Endothelial cell of umbilical vein (primary cell): ENCODE measurements at regions of chr7 and their contacts with region 1.

Region 1: DNA sequence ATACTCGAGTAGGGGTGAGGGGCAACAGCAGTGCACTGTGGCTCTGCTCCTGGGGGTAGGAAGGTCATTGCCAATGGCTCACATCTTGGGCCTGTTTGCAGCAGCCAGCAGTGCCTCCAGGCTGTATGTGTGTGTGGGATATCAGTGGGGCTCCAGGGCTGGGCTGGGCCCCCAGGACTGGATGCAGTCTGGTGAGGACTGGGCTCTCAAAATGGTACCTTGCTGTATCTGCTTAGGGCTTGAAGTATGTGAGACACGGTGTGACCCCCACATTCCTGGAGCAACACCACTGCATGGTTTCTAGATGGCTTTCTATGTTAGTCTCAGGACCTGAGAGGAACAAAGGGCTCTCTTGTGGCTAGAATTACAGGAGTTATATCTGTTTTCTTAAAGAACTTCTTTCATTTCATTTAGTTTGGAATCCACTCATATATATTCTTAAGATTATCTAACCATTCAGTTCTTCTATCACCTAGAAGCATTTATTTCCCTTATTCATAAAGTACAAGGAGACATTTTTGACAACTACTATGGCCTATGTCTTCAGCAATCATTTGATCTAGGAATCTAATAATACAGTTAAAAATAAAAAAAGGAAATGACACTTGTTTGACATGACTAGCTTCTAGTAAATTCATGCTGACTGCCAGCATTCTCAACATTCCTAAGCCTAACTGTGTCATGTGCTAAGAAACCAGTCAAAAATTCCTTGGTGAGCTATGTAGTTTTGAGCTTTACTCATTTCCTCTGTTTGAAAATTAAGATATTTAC is 443.2 kb upstream of the SEMA3A start:
- DNase-seq: peak; percentile 92
- H3K4me3 ChIP-seq: no peak overlapping the region
- H3K27ac ChIP-seq: peak overlapping the region; percentile 97
- H3K4me1 ChIP-seq: peaks cover 25% of the 10 kb centered on the region
- H3K27me3 ChIP-seq: no peaks in the 10 kb centered on the region
- CTCF ChIP-seq: no peak
- POLR2A ChIP-seq: no peak

Region 2: DNA sequence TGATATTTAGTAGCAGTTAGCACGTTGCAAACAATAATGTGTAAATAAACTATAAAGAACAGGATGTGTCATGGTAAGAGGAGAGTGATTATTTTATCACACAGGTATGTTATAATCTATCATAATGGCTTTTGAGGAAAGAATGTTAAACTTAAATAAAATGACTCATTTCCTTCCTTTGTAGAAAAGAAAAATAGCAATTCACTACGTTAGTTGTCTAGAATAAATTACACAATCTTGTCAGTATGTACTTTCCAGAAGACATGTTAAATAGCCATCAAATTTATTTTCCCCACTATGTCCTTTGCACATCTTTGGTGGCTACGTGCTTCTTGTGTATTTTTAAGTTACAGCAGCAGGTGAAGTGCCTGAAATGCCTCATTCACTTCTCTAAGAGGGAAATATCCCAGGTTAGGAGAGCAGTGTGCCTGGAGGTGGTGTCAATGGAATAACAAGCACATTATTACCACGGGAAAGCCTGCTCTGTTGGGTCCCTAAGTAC is 576.9 kb before region 1 on chr7:
- CTCF ChIA-PET with region 1: no interaction called
- POLR2A ChIA-PET with region 1: no interaction called
- dilution Hi-C with region 1: no loop called
- intact Hi-C with region 1: loop called (anchors 1 kb)
- DNase-seq: peak; percentile 77
- H3K4me3 ChIP-seq: peak overlapping the region in 1 of 3 experiments; percentile 32
- H3K27ac ChIP-seq: peak overlapping the region; percentile 89
- H3K4me1 ChIP-seq: peaks cover 24% of the 10 kb centered on the region
- H3K27me3 ChIP-seq: no peaks in the 10 kb centered on the region
- CTCF ChIP-seq: no peak
- POLR2A ChIP-seq: no peak

Region 3: DNA sequence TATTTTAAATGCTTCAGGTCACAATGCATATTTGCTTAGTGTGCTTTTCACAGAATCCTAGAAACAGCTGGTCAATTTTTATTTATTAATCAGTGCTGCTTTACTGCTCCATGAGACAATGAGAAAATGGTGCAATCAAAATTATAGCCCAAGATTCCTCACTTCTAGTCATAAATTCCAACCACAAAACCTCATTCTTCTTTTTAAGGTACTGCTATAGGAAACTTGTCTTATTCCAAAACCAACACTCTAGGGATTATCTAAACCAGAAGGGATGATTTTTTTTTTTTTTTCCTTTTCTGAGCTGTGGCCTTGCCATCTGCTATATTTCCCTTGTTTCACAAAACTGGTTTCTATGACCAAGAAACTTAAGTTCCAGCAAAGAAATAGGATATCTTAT is 379.1 kb before region 1 on chr7:
- CTCF ChIA-PET with region 1: no interaction called
- POLR2A ChIA-PET with region 1: no interaction called
- dilution Hi-C with region 1: no loop called
- intact Hi-C with region 1: no loop called
- DNase-seq: no peak
- H3K4me3 ChIP-seq: no peak overlapping the region
- H3K27ac ChIP-seq: no peak overlapping the region
- H3K4me1 ChIP-seq: no peaks in the 10 kb centered on the region
- H3K27me3 ChIP-seq: no peaks in the 10 kb centered on the region
- CTCF ChIP-seq: no peak
- POLR2A ChIP-seq: no peak

Region 4: GRCh38 chr7:84529480-84530205 is 108.1 kb before region 1 on chr7:
- CTCF ChIA-PET with region 1: no interaction called
- POLR2A ChIA-PET with region 1: no interaction called
- dilution Hi-C with region 1: no loop called
- intact Hi-C with region 1: loop called (anchors 5 kb)
- DNase-seq: peak; percentile 75
- H3K4me3 ChIP-seq: no peak overlapping the region
- H3K27ac ChIP-seq: peak overlapping the region; percentile 46
- H3K4me1 ChIP-seq: peaks cover 14% of the 10 kb centered on the region
- H3K27me3 ChIP-seq: no peaks in the 10 kb centered on the region
- CTCF ChIP-seq: no peak
- POLR2A ChIP-seq: no peak

Region 5: DNA sequence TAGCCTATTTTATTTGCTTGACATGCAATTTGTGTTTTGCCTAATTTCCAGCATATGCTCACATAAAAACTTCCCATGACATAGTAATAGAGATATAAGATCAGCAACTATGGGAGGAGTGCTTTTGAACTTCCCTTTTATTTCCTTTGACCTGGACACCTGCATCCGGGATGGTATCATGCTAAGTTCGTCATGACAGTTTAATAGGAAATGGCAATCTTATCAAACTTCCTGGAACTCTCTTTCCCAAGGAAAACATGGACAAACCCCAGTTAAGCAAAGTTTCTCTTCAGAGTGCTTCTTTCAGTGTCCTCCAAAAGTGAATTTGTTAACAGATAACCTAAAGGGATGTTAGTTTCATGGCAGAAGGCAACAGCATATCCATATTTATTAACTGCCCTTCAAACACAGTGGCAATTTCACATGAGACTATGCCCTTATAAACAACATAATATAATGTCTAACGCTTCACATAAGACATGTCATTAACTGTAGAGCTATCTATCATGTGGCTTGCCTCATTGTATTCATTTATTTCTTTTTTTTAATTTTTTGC is 31.5 kb after region 1 on chr7:
- CTCF ChIA-PET with region 1: no interaction called
- POLR2A ChIA-PET with region 1: no interaction called
- dilution Hi-C with region 1: no loop called
- intact Hi-C with region 1: loop called (anchors 1 kb)
- DNase-seq: peak; percentile 86
- H3K4me3 ChIP-seq: no peak overlapping the region
- H3K27ac ChIP-seq: peak overlapping the region; percentile 76
- H3K4me1 ChIP-seq: peaks cover 27% of the 10 kb centered on the region
- H3K27me3 ChIP-seq: no peaks in the 10 kb centered on the region
- CTCF ChIP-seq: no peak
- POLR2A ChIP-seq: no peak

Region 6: DNA sequence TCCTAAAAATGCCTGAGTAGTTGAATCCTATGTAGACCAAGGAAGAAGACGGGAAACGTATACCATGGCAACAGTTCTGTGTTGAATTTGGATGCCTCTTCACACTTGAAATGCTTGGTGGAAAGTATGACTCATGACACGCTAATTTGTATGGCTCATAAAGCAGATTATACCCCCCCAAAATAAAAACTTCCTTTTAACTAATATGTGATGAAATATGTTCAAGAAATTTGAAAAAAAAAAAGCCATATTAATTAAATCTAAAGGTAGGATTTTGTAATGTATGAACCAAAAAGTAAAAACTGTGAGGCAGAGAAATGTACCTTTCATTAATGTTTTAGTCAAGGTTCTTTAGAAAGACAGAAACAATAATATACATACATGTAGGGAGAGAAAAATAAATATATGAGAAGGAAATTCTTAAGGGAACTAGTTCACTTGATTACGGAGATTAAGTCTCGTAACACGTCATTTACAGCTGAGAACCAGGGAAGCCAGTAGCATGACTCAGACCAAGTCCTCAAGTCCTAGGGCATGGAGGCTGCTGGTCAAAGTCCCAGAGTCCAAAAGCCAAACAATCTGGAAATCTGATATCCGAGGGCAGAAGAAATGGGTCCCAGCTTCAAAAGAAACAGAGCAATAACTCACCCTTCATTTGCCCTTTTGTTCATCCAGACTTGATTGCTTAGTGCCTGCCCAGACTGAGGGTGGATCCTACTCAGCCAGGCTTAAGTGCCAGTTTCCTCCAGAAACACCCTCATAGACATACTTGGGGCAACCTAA is 64.0 kb after region 1 on chr7:
- CTCF ChIA-PET with region 1: interaction called, 9 read pairs
- POLR2A ChIA-PET with region 1: no interaction called
- dilution Hi-C with region 1: no loop called
- intact Hi-C with region 1: loop called (anchors 1 kb)
- DNase-seq: peak; percentile 95
- H3K4me3 ChIP-seq: peak overlapping the region in 1 of 3 experiments; percentile 5
- H3K27ac ChIP-seq: peak overlapping the region; percentile 97
- H3K4me1 ChIP-seq: peaks cover 31% of the 10 kb centered on the region
- H3K27me3 ChIP-seq: no peaks in the 10 kb centered on the region
- CTCF ChIP-seq: no peak
- POLR2A ChIP-seq: no peak

Region 7: DNA sequence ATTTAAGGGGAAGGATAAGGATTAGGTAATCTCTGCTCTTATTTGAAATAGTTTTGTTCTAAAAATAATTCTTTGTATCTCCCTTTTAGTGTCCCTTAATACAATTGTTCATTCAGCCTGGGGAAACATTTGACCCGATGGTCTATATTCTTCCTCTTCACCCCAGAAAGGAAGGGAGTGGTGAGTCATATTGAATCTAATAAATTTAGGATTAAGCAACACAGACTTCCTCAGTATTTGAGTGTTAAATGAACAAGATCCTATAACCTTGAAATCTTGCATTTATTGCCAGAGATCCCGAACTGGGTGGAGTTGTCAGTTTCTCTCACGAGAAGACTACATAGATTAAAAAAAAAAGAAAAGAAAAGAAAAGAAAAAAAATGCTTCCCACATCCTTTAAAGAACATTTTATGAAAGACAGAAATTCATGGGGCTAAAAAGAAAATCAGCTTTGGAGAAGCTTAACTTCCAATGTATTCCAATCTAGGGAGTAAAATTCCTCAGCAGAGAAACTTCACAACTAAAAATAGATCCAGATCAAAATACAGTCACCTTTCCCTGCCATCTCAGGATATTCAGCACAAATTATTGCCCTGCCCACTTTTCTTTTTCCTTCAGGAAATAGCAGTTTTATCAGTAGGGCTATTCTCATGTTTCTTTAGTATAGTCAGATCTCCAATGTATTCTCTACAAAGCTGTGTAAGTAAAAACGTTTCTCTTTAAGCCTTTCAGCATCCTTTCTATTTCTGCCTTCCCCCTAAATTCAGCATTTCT is 466.9 kb after region 1 on chr7:
- CTCF ChIA-PET with region 1: no interaction called
- POLR2A ChIA-PET with region 1: no interaction called
- dilution Hi-C with region 1: no loop called
- intact Hi-C with region 1: loop called (anchors 10 kb)
- DNase-seq: peak; percentile 80
- H3K4me3 ChIP-seq: peak overlapping the region in 1 of 3 experiments; percentile 45
- H3K27ac ChIP-seq: peak overlapping the region; percentile 53
- H3K4me1 ChIP-seq: peaks cover 52% of the 10 kb centered on the region
- H3K27me3 ChIP-seq: no peaks in the 10 kb centered on the region
- CTCF ChIP-seq: no peak
- POLR2A ChIP-seq: no peak